HepG2 (cell line): ENCODE measurements at regions of chrX and their contacts with region 1.

Region 1: GRCh38 chrX:115894087-115894486 is 276.5 kb upstream of the AGTR2 start:
- DNase-seq: peak; percentile 63
- ATAC-seq: peak; percentile 61
- H3K4me3 ChIP-seq: peak overlapping the region; percentile 13 to 74 (median 47); a peak in 5 of 6 replicates
- H3K27ac ChIP-seq: no peak overlapping the region
- H3K4me1 ChIP-seq: peaks cover 44% of the 10 kb centered on the region
- H3K27me3 ChIP-seq: no peaks in the 10 kb centered on the region; a peak in 1 of 5 replicates
- CTCF ChIP-seq: peak; percentile 80
- EP300 ChIP-seq: no peak
- POLR2A ChIP-seq: no peak
- RAD21 ChIP-seq: 0 out of 2 replicates have a peak, but pooled peaks have one; percentile 57

Region 2: DNA sequence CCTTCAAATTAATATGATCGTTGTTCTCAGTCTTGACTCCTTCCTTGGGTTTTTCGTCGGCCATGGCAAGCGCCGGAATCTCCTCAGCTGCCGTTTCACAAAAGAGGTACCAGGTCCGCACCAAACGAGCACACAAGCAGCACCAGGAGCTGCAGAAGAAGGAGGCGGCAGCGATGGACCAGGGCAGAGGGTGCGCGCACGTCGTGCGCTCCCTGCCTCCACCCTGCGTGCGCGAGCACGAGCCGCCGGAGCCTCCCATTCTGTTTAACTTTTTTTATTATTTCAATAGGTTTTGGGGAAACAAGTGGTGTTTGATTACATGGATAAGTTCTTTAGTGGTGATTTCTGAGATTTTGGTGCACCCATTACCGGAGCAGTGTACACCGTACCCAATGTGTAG is 174.9 kb before region 1 on chrX:
- CTCF ChIA-PET with region 1: no interaction called
- POLR2A ChIA-PET with region 1: no interaction called
- in situ Hi-C with region 1: no loop called
- intact Hi-C with region 1: no loop called
- DNase-seq: no peak
- ATAC-seq: no peak
- H3K4me3 ChIP-seq: no peak overlapping the region
- H3K27ac ChIP-seq: no peak overlapping the region
- H3K4me1 ChIP-seq: no peaks in the 10 kb centered on the region
- H3K27me3 ChIP-seq: no peaks in the 10 kb centered on the region
- CTCF ChIP-seq: no peak
- EP300 ChIP-seq: no peak
- POLR2A ChIP-seq: no peak
- RAD21 ChIP-seq: no peak

Region 3: DNA sequence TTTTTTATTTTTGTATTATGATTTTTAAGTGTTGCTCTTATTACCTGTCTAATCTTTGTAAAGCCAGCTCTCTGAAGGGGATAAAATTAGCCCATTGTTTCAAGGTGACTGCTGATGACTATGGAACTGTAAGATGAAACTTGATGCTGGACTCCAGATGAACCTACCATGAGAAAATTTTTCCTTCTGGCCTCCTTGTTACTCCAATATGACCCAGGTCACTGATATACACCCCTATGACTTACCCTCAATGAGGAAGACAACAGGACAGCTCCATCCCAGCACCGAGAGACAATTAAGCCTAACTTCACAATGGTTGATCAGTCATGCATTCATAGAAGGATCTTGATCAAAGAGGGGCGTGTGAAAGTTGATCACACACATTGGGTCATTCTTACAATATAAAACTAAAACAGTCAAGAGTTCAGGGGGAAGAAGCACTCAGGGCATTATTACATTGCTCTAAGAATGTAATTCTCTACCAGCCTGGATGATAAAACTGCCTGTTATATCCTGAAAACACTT is 45.6 kb after region 1 on chrX:
- CTCF ChIA-PET with region 1: no interaction called
- POLR2A ChIA-PET with region 1: no interaction called
- in situ Hi-C with region 1: no loop called
- intact Hi-C with region 1: no loop called
- DNase-seq: no peak
- ATAC-seq: no peak
- H3K4me3 ChIP-seq: no peak overlapping the region
- H3K27ac ChIP-seq: no peak overlapping the region
- H3K4me1 ChIP-seq: peaks cover 22% of the 10 kb centered on the region
- H3K27me3 ChIP-seq: no peaks in the 10 kb centered on the region
- CTCF ChIP-seq: no peak
- EP300 ChIP-seq: no peak
- POLR2A ChIP-seq: no peak
- RAD21 ChIP-seq: no peak

Region 4: DNA sequence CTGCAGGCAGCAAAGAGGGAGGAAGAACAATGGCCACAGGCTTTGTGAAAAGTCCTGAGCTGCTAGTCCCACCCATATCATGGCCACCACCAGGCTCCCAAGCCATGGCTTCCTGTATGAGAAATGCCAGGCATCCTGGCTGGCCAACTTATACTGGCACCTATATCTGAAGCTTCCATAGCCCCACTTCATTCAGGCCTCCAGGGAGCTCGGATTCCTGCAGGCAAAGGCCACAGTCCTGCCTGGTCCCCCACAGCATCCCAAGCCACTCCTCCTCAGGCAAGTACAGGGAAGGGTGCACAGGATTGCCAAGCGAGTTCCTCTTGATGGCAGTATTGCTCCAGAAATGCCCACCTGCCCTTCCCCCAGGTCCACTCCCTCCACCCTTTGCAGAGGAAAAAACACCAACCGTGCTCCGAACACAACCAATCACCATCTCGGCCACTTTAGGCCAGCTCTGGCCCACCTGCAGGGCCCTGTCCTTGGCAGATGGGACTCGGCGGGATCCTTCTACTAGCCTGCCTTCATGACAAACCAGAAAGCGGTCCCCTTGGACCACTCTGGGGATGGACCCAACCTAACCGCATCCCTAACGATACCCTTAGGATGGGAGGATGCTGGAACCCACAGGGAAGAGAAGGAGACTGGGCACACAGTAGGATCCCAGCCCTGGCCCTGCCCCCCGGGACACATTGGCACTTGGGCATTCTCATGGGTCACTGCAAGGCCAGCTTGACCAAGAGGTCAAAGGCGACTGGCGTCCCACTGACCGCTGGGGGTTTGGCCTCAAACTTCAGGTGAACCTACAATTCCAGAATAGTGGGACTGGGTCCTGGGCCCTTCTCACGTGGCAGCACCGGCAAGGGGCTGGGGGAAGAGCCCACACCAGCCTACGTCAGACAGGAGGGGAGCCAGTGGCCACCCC is 56.1 kb after region 1 on chrX:
- CTCF ChIA-PET with region 1: interaction called, 6 read pairs
- POLR2A ChIA-PET with region 1: no interaction called
- in situ Hi-C with region 1: no loop called
- intact Hi-C with region 1: loop called (anchors 2 kb)
- DNase-seq: peak; percentile 33
- ATAC-seq: peak; percentile 76
- H3K4me3 ChIP-seq: peak overlapping the region in 2 of 3 experiments; percentile 20 to 48; a peak in 5 of 6 replicates
- H3K27ac ChIP-seq: no peak overlapping the region
- H3K4me1 ChIP-seq: peaks cover 43% of the 10 kb centered on the region
- H3K27me3 ChIP-seq: peaks cover 0 to 4% of the 10 kb centered on the region in 2 experiments; a peak in 2 of 5 replicates
- CTCF ChIP-seq: peak; percentile 86
- EP300 ChIP-seq: no peak
- POLR2A ChIP-seq: no peak
- RAD21 ChIP-seq: peak; percentile 68